ENCODE measurements at regions of chr13 and their contacts with region 1.

Region 1: DNA sequence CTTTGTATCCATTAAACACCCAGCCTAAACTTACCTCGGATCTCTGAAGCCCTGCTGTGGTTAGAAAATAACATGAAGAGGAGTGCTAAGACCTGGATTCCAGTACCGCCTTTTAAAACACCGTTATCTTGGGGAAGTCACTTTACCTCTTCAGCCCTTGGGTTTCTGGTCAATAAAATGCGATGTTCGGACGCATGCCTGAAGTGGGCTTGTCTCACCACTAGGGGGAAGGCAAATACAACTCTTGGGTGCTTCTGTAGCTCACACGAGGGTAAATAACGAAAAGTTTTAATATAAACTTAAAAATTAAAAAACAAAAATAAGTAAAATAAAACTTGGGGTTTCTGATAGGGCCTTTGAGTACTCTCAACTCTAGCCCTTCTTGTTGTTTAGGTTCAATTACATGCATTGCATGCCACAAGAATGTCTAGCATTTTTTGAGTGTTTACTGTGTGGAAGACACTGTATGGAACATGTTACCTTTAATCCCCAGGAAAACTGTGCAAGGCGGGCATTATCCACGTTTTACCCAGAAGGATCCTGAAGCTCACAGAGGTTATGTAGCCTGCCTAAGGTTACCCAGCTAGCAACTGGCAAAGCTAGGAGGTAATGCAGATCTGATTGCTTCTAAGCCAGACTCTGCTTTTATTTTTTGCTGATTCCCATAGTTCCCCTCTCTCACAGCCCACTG is 240.4 kb downstream of the LMO7 start:
- DNase-seq: peak; percentile 57
- H3K4me3 ChIP-seq: no peak overlapping the region
- H3K27ac ChIP-seq: no peak overlapping the region
- H3K4me1 ChIP-seq: no peaks in the 10 kb centered on the region
- H3K27me3 ChIP-seq: no peaks in the 10 kb centered on the region
- CTCF ChIP-seq: peak; percentile 86

Region 2: GRCh38 chr13:75055296-75055695 is 821.2 kb before region 1 on chr13:
- intact Hi-C with region 1: no loop called
- DNase-seq: no peak
- H3K4me3 ChIP-seq: no peak overlapping the region
- H3K27ac ChIP-seq: no peak overlapping the region
- H3K4me1 ChIP-seq: no peaks in the 10 kb centered on the region
- H3K27me3 ChIP-seq: no peaks in the 10 kb centered on the region
- CTCF ChIP-seq: no peak

Region 3: GRCh38 chr13:75986818-75987217 is 110.3 kb after region 1 on chr13:
- intact Hi-C with region 1: no loop called
- DNase-seq: no peak
- H3K4me3 ChIP-seq: no peak overlapping the region
- H3K27ac ChIP-seq: no peak overlapping the region
- H3K4me1 ChIP-seq: no peaks in the 10 kb centered on the region
- H3K27me3 ChIP-seq: no peaks in the 10 kb centered on the region
- CTCF ChIP-seq: no peak

Region 4: GRCh38 chr13:76016799-76017400 is 140.4 kb after region 1 on chr13:
- intact Hi-C with region 1: loop called (anchors 10 kb)
- DNase-seq: peak; percentile 26
- H3K4me3 ChIP-seq: no peak overlapping the region
- H3K27ac ChIP-seq: no peak overlapping the region
- H3K4me1 ChIP-seq: no peaks in the 10 kb centered on the region
- H3K27me3 ChIP-seq: no peaks in the 10 kb centered on the region
- CTCF ChIP-seq: peak; percentile 22

Region 5: GRCh38 chr13:76980075-76980718 is 1103.7 kb after region 1 on chr13:
- intact Hi-C with region 1: loop called (anchors 10 kb)
- DNase-seq: peak; percentile 82
- H3K4me3 ChIP-seq: peak overlapping the region; percentile 8
- H3K27ac ChIP-seq: no peak overlapping the region
- H3K4me1 ChIP-seq: peaks cover 5% of the 10 kb centered on the region
- H3K27me3 ChIP-seq: no peaks in the 10 kb centered on the region
- CTCF ChIP-seq: peak; percentile 98